ENCODE measurements at regions of chr13 and their contacts with region 1.

Region 1: DNA sequence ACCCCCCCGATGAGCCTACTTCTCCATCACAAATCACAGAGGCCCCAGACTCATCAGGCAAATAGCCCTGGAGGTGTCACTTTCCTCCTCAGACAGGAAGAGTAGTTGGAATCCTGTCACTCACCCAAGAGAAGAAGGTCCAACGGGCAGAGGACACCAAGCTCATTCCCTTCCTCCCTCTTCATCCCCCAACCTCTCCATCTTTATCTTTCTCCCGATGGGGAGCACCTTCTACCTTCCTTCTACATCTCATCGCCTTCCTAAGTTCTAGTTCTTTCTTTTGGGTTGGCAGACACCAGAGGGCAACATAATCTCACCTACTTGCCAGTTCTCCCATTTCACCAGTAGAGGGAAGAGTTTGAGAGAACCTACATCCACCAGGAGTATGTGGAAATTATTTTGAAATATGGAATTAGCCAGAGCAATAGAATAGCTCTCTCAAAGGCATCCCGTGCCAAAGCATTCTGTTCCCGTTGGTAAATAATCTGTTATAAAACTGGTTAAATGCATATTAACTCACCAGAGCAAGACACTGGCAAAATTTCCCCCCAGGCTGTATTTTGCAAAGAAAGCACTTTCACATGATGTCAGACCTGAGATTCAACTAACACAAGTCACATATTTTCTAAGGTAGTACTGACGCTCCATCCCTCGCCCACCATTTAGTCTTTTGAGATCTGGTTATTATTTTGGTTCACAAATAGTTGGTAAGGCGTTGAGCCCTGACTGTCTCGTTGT is 55.0 kb downstream of the ZIC5 start:
- DNase-seq: peak; percentile 63 to 77 (median 73)
- H3K4me3 ChIP-seq: no peak overlapping the region
- H3K27ac ChIP-seq: no peak overlapping the region
- H3K4me1 ChIP-seq: no peaks in the 10 kb centered on the region
- H3K27me3 ChIP-seq: peaks cover 0 to 40% (median 7%) of the 10 kb centered on the region in 5 experiments

Region 2: GRCh38 chr13:100514788-100515409 is 598.4 kb after region 1 on chr13:
- CTCF ChIA-PET with region 1: interaction called, 20 read pairs
- POLR2A ChIA-PET with region 1: no interaction called
- DNase-seq: peak; percentile 58 to 77 (median 71)
- H3K4me3 ChIP-seq: no peak overlapping the region
- H3K27ac ChIP-seq: no peak overlapping the region
- H3K4me1 ChIP-seq: peaks cover 0 to 4% (median 2%) of the 10 kb centered on the region in 4 experiments
- H3K27me3 ChIP-seq: peaks cover 0 to 3% (median 0%) of the 10 kb centered on the region in 5 experiments